Activated CD4-positive, alpha-beta T cell treated with anti-CD3 and anti-CD28 coated beads for 36 hours (primary cell): ENCODE measurements at regions of chr1 and their contacts with region 1.

Region 1: GRCh38 chr1:236603991-236604904 is at the start of gene HEATR1:
- DNase-seq: peak; percentile 94
- ATAC-seq: peak; percentile 94
- H3K4me3 Mint-ChIP-seq: peak within 1 kb of the TSS; percentile 98
- H3K27ac Mint-ChIP-seq: peak within 1 kb of the TSS; percentile 94
- H3K4me1 Mint-ChIP-seq: peaks cover 21% of the 10 kb centered on the region
- H3K27me3 Mint-ChIP-seq: peaks cover 7% of the 10 kb centered on the region
- total RNA-seq, gene HEATR1: 82.4 to 89.1 TPM

Region 2: GRCh38 chr1:236281654-236282424 is 322.4 kb before region 1 on chr1 and contains the start of gene ERO1B:
- CTCF ChIA-PET with region 1: no interaction called
- POLR2A ChIA-PET with region 1: no interaction called
- intact Hi-C with region 1: loop called in 1 of 2 experiments (anchors 1 kb)
- DNase-seq: peak; percentile 98
- ATAC-seq: peak; percentile 86
- H3K4me3 Mint-ChIP-seq: peak within 1 kb of the TSS; percentile 82
- H3K27ac Mint-ChIP-seq: peak within 1 kb of the TSS; percentile 70
- H3K4me1 Mint-ChIP-seq: peaks cover 47% of the 10 kb centered on the region
- H3K27me3 Mint-ChIP-seq: peaks cover 1% of the 10 kb centered on the region
- total RNA-seq, gene ERO1B: 2.2 to 2.8 TPM

Region 3: DNA sequence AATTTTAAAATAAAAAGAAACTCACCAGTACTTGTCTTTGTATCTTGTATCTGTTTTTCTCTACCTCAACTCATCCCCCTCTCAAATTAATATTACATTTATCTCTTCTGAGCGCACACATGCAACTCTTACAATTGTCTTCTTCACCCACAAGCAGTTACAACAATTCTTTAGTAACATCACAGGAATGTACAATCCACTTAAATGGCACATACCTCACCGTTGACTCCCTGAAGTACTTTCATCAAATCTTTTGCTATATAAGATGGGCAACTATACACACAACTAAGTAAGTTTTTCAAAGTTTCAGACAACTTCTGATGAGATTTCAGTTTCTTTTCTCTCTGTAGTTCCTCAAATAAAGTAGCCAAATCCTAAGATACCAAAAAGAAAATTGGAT is 28.2 kb before region 1 on chr1:
- CTCF ChIA-PET with region 1: no interaction called
- POLR2A ChIA-PET with region 1: no interaction called
- intact Hi-C with region 1: no loop called
- DNase-seq: no peak
- ATAC-seq: no peak
- H3K4me3 Mint-ChIP-seq: no peak overlapping the region
- H3K27ac Mint-ChIP-seq: peak overlapping the region; percentile 69
- H3K4me1 Mint-ChIP-seq: no peaks in the 10 kb centered on the region
- H3K27me3 Mint-ChIP-seq: no peaks in the 10 kb centered on the region

Region 4: DNA sequence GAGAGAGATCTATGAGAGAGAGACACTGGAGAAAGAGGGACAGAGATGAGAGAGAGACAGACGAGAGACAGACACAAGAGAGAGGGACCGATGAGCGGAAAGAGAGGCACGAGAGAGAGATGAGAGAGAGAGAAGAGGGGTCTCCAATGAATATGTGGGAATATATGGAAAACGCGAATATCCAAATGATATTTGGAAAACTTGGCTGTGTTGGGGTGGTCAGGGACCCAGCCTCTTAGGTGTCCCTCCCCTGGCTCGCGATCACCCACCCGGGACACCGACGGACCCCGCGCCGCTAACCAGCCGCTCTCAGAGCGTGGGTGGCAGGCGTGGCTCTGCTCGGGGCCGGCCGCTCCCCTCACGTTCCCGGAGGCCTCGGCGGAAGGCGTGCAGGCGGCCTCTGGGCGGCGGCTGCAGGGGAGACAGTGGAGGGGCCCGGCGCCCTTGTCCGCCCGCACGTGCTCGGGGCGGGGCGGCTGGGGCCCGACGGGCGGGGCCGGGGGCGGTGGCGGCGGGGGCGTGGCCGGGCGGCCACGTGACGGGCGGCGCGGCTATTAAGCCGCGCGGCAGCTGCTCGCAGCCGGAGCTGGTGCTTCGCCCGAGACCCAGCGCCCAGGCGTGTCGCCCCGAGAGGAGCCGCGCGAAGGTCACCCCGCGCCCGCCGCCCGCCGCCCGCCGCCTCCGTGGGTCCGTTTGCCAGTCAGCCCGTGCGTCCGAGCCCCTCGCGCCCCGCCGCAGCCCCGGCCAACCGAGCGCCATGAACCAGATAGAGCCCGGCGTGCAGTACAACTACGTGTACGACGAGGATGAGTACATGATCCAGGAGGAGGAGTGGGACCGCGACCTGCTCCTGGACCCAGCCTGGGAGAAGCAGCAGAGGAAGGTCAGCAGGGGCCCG is 81.9 kb after region 1 on chr1 and contains the start of gene ACTN2:
- CTCF ChIA-PET with region 1: no interaction called
- POLR2A ChIA-PET with region 1: no interaction called
- intact Hi-C with region 1: loop called in 1 of 2 experiments (anchors 1 kb)
- DNase-seq: peak; percentile 68
- ATAC-seq: peak; percentile 82
- H3K4me3 Mint-ChIP-seq: peak within 1 kb of the TSS; percentile 51
- H3K27ac Mint-ChIP-seq: peak within 1 kb of the TSS; percentile 43
- H3K4me1 Mint-ChIP-seq: peaks cover 20% of the 10 kb centered on the region
- H3K27me3 Mint-ChIP-seq: peaks cover 34% of the 10 kb centered on the region
- total RNA-seq, gene ACTN2: 0.44 to 0.46 TPM

Region 5: DNA sequence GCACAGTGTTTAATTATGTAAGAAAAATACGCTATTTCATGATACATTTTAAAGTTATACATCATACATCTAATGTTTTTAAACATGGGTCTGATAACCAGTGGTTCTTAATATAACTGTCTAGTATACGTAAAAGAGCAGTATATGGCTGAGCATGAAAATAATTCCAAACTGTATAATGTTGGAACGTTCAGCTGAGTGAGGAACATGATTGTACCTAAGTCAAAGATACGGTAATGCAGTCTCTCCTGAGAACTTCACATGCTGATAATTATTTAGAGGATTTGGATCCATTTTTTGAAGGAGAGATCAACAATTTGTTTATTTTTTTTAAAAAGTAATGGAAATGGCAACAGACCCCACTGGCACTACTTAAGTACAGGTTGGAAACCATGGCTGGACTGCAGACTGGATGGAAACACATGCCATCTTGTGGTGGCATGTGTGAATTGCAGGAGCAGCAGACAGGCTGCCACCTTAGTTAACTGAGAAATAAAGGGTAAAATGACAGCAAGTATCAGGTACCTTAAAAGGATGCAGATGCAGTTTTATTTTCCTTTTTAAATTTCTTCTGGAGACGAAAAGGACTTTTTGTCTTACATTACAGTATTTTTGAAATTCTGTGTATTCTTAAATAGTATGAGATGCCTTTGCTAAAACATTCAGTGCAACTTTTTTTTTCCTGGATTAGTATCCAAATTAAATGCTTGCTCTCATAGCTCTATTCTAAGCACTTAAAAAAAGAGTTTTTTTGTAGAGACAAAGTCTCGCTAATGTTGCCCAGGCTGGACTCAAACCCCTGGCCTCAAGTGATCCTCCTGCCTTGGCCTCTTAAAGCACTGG is 264.6 kb after region 1 on chr1:
- CTCF ChIA-PET with region 1: interaction called, 4 read pairs
- POLR2A ChIA-PET with region 1: no interaction called
- intact Hi-C with region 1: loop called in 1 of 2 experiments (anchors 2 kb)
- DNase-seq: peak; percentile 63
- ATAC-seq: peak; percentile 76
- H3K4me3 Mint-ChIP-seq: no peak overlapping the region
- H3K27ac Mint-ChIP-seq: no peak overlapping the region
- H3K4me1 Mint-ChIP-seq: peaks cover 3% of the 10 kb centered on the region
- H3K27me3 Mint-ChIP-seq: no peaks in the 10 kb centered on the region

Region 6: GRCh38 chr1:237562242-237562823 is 958.1 kb after region 1 on chr1:
- CTCF ChIA-PET with region 1: interaction called, 4 read pairs
- POLR2A ChIA-PET with region 1: no interaction called
- intact Hi-C with region 1: loop called in 1 of 2 experiments (anchors 5 kb)
- DNase-seq: no peak
- ATAC-seq: peak; percentile 72
- H3K4me3 Mint-ChIP-seq: no peak overlapping the region
- H3K27ac Mint-ChIP-seq: no peak overlapping the region
- H3K4me1 Mint-ChIP-seq: no peaks in the 10 kb centered on the region
- H3K27me3 Mint-ChIP-seq: peaks cover 11% of the 10 kb centered on the region